ENCODE measurements at regions of chr11 and their contacts with region 1.

Region 1: GRCh38 chr11:107858217-107859070 is at the start of gene SLC35F2:
- DNase-seq: peak; percentile 78
- ATAC-seq: peak; percentile 93
- H3K4me3 Mint-ChIP-seq: peak within 1 kb of the TSS; percentile 96
- H3K27ac Mint-ChIP-seq: peak within 1 kb of the TSS; percentile 90
- H3K4me1 Mint-ChIP-seq: peaks cover 30% of the 10 kb centered on the region
- H3K27me3 Mint-ChIP-seq: no peaks in the 10 kb centered on the region
- CTCF ChIP-seq: no peak
- total RNA-seq, gene SLC35F2: 20.5 and 21.9 TPM in 2 replicates

Region 2: DNA sequence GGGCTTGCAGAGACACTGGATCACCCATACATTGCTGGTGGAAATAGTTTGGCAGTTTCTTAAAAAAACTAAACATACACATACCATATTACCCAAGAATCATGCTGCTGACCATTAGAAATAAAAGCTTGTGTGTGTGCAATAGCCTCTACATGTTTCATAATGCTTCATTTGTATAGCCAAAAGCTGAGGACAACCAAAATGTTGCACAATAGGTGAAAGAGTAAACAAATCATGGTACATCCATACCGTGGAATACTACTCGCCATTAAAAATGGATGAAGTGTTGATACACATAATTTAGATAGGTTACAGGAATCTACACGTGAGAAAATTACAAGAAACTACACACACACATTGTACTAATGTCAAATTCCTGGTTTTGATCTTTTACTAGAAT is 1787.8 kb before region 1 on chr11:
- CTCF ChIA-PET with region 1: no interaction called
- POLR2A ChIA-PET with region 1: no interaction called
- intact Hi-C with region 1: loop called (anchors 5 kb)
- DNase-seq: no peak
- ATAC-seq: no peak
- H3K4me3 Mint-ChIP-seq: no peak overlapping the region
- H3K27ac Mint-ChIP-seq: no peak overlapping the region
- H3K4me1 Mint-ChIP-seq: no peaks in the 10 kb centered on the region
- H3K27me3 Mint-ChIP-seq: no peaks in the 10 kb centered on the region
- CTCF ChIP-seq: no peak

Region 3: DNA sequence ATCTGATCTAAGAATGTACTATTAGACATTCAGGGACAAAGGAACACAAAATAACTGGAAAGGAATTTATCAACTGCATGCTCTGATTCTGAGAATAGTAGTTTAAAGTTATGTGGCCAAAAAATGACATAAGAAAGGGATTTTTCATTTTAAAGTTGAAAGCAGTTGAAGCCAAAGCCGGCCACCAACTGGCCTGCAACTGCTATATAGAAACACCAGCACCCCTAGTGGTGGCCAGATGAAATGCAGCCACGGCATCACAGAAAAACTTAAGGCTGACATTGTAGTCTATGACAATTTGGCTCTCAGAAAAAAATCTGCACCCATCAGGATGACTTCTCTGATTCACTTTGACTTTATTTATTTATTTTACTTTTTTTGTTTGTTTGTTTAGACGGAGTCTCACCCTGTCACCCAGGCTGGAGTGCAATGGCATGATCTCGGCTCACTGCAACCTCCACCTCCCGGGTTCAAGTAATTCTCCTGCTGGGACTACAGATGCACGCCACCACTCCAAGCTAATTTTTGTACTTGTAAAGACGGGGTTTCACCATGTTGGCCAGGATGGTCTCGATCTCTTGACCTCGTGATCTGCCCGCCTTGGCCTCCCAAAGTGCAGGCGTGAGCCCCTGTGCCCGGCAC is 59.1 kb before region 1 on chr11:
- CTCF ChIA-PET with region 1: no interaction called
- POLR2A ChIA-PET with region 1: interaction called, 3 read pairs
- intact Hi-C with region 1: loop called (anchors 1 kb)
- DNase-seq: peak; percentile 17
- ATAC-seq: peak; percentile 84
- H3K4me3 Mint-ChIP-seq: no peak overlapping the region
- H3K27ac Mint-ChIP-seq: no peak overlapping the region
- H3K4me1 Mint-ChIP-seq: no peaks in the 10 kb centered on the region
- H3K27me3 Mint-ChIP-seq: no peaks in the 10 kb centered on the region
- CTCF ChIP-seq: peak; percentile 62

Region 4: GRCh38 chr11:107848345-107848744 is 10.1 kb before region 1 on chr11:
- CTCF ChIA-PET with region 1: no interaction called
- POLR2A ChIA-PET with region 1: interaction called, 3 read pairs
- intact Hi-C with region 1: loop called (anchors 1 kb)
- DNase-seq: no peak
- ATAC-seq: no peak
- H3K4me3 Mint-ChIP-seq: no peak overlapping the region
- H3K27ac Mint-ChIP-seq: no peak overlapping the region
- H3K4me1 Mint-ChIP-seq: peaks cover 30% of the 10 kb centered on the region
- H3K27me3 Mint-ChIP-seq: no peaks in the 10 kb centered on the region
- CTCF ChIP-seq: no peak

Region 5: GRCh38 chr11:107928046-107928766 is 69.8 kb after region 1 on chr11 and contains the start of gene RAB39A:
- CTCF ChIA-PET with region 1: no interaction called
- POLR2A ChIA-PET with region 1: no interaction called
- intact Hi-C with region 1: loop called (anchors 1 kb)
- DNase-seq: peak; percentile 82
- ATAC-seq: peak; percentile 87
- H3K4me3 Mint-ChIP-seq: peak within 1 kb of the TSS; percentile 91
- H3K27ac Mint-ChIP-seq: peak within 1 kb of the TSS; percentile 80
- H3K4me1 Mint-ChIP-seq: peaks cover 37% of the 10 kb centered on the region
- H3K27me3 Mint-ChIP-seq: peaks cover 4% of the 10 kb centered on the region
- CTCF ChIP-seq: no peak
- total RNA-seq, gene RAB39A: 3.6 and 4.1 TPM in 2 replicates

Region 6: DNA sequence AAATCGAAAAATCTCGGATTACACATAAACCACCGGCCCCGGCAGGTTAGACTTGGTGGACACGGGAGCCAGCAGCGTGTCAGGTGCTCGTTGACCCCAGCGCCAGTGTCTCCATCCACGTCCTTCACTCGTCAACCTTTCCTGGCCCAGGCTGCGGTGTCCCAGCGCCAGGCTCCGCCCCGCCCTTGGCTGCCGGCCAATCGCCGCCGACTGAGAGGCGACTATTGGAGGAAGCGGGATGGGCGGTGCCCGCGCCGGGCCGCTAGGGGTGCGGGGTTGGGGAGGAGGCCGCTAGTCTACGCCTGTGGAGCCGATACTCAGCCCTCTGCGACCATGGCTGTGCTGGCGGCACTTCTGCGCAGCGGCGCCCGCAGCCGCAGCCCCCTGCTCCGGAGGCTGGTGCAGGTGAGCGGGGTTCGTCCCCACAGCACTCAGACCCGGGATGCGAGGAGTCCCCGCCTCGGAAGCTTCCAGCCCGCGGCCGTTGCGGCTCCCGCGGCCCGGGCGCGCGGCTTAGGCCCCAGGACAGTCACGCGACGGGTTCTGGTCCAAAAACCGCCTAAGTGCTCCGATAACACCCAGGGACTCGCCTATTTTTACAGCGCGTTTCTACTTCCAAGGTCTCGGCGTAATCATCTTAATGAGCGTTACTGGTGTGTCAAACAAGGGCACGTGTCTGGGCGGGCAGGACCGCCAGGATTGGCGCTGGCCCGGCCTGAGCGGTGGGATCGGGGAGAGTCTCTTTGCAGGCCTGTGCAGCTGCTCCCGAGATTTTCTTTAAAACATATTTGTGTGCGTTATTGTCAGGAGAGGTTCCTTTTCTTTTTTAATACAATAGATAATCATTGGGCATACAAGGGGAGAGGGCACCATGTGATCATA is 263.1 kb after region 1 on chr11 and contains the start of gene ACAT1:
- CTCF ChIA-PET with region 1: no interaction called
- POLR2A ChIA-PET with region 1: no interaction called
- intact Hi-C with region 1: loop called (anchors 1 kb)
- DNase-seq: peak; percentile 96
- ATAC-seq: peak; percentile 99
- H3K4me3 Mint-ChIP-seq: peak within 1 kb of the TSS; percentile 87
- H3K27ac Mint-ChIP-seq: peak within 1 kb of the TSS; percentile 56
- H3K4me1 Mint-ChIP-seq: peaks cover 39% of the 10 kb centered on the region
- H3K27me3 Mint-ChIP-seq: no peaks in the 10 kb centered on the region
- CTCF ChIP-seq: no peak
- total RNA-seq, gene ACAT1: 50.1 and 51.1 TPM in 2 replicates

Region 7: DNA sequence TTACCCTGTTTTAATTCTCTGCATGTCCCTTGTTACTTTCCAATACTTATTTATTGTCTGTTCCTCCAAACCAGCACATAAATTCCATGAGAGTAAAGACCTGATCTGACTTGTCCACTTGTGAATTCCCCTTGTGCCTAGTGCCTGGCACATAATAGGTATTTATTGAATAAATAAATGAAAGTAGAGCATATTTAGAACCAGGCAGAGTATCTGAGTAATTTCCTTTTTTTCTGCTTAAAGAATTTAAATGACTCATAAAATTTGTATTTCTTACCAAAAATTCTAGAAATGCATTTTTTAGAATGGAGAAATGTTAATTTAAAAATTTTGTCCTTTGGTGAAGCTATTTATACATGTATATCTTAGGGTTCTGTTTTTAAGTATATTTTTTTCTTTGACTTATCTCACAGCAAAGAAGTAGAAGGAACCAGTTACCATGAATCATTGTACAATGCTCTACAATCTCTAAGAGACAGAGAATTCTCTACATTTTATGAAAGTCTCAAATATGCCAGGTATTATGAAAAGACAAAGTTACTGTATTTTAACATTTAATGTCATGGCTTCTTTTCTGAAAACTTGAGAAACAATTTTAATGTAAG is 461.2 kb after region 1 on chr11:
- CTCF ChIA-PET with region 1: no interaction called
- POLR2A ChIA-PET with region 1: no interaction called
- intact Hi-C with region 1: no loop called
- DNase-seq: no peak
- ATAC-seq: no peak
- H3K4me3 Mint-ChIP-seq: no peak overlapping the region
- H3K27ac Mint-ChIP-seq: no peak overlapping the region
- H3K4me1 Mint-ChIP-seq: no peaks in the 10 kb centered on the region
- H3K27me3 Mint-ChIP-seq: no peaks in the 10 kb centered on the region
- CTCF ChIP-seq: no peak

Measured in activated B cell treated with CpG ODN at 0.5 μM for 24 hours (primary cell).